PC-3 (cell line): ENCODE measurements at regions of chr1 and their contacts with region 1.

Region 1: GRCh38 chr1:89865498-89866385 is 44.9 kb downstream of the LRRC8D start:
- DNase-seq: peak; percentile 86
- ATAC-seq: peak; percentile 92
- H3K4me3 ChIP-seq: no peak overlapping the region; the same call in 1 of the 2 replicates
- H3K27ac ChIP-seq: peak overlapping the region; percentile 10; the same call in 1 of the 2 replicates
- H3K4me1 ChIP-seq: peaks cover 20% of the 10 kb centered on the region
- H3K27me3 ChIP-seq: no peaks in the 10 kb centered on the region
- CTCF ChIP-seq: no peak

Region 2: DNA sequence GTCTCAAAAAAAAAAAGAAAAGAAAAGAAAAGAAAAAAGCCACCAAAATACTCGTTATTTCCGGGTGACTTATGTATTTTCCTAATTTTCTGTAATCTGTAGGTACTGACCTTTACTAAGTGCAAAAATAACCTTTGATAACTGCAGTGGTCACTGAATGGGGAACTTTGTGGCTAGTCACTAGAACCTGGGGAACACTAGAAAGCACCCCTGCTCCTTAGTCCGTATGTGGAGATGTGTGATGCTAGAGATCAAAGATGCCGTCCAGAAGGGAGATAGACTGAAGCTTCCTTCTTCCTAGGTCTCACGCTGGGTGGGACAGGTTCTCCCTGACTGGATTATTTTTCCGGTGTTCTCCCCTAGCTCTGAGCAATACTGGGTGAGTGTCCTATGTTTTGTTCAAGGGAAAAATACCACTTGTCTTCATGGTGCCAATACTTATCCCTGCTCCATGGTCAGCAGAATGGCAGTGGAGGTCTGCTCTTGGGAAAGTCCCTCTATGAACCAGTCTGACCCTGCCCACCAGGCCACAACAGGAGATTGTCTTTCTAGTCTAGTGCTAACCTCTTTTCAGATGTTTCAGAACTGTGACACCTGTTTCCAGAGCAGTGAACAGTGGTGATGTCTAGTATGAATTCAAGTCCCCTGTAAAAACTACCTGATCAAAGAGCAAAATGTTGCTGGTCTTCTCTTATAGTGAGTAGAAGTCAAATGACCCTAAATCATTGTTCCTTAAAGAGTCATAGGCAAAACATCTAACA is 1014.3 kb before region 1 on chr1:
- CTCF ChIA-PET with region 1: no interaction called
- POLR2A ChIA-PET with region 1: no interaction called
- intact Hi-C with region 1: no loop called
- DNase-seq: no peak
- ATAC-seq: no peak
- H3K4me3 ChIP-seq: no peak overlapping the region
- H3K27ac ChIP-seq: no peak overlapping the region
- H3K4me1 ChIP-seq: no peaks in the 10 kb centered on the region
- H3K27me3 ChIP-seq: no peaks in the 10 kb centered on the region
- CTCF ChIP-seq: no peak

Region 3: GRCh38 chr1:89524369-89525168 is 341.2 kb before region 1 on chr1 and contains the start of gene LRRC8B:
- CTCF ChIA-PET with region 1: no interaction called
- POLR2A ChIA-PET with region 1: no interaction called
- intact Hi-C with region 1: no loop called
- DNase-seq: peak; percentile 93
- ATAC-seq: peak; percentile 92
- H3K4me3 ChIP-seq: peak within 1 kb of the TSS; percentile 92
- H3K27ac ChIP-seq: peak within 1 kb of the TSS; percentile 79
- H3K4me1 ChIP-seq: peaks cover 23% of the 10 kb centered on the region
- H3K27me3 ChIP-seq: no peaks in the 10 kb centered on the region
- CTCF ChIP-seq: no peak
- total RNA-seq, gene LRRC8B: 8.4 and 12.3 TPM in 2 replicates

Region 4: DNA sequence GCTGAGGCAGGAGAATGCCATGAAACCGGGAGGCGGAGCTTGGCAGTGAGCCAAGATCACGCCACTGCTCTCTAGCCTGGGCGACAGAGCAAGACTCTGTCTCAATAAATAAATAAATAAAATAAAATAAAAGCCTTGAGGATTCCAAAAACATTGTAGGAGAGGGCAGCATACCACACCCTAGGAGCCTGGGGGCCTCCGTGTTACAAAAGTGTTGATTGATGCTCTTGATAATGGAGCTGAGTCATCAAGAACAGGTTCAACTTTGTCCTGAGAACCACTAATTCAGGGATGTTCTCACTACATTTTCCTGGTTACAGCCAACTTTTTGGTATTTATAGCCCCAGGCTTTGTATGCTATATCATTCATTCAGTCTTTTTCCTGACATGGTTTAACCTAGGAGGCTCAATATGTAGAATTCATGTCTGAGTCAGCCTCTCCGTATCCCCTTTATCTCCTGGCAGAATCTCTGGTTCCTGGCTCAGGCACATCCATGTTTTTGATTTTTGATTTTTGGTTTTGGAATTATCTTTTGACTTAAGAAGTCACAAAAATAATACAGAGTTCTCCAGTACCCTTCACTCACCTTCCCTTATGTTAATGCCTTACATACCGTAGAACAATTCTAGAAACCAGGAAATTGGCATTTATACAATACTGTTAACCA is 24.5 kb after region 1 on chr1:
- CTCF ChIA-PET with region 1: no interaction called
- POLR2A ChIA-PET with region 1: no interaction called
- intact Hi-C with region 1: loop called (anchors 2 kb)
- DNase-seq: peak; percentile 99
- ATAC-seq: peak; percentile 68
- H3K4me3 ChIP-seq: peak overlapping the region; percentile 17; the same call in 1 of the 2 replicates
- H3K27ac ChIP-seq: peak overlapping the region; percentile 94
- H3K4me1 ChIP-seq: peaks cover 57% of the 10 kb centered on the region
- H3K27me3 ChIP-seq: no peaks in the 10 kb centered on the region
- CTCF ChIP-seq: no peak